ENCODE measurements at regions of chr13 and their contacts with region 1.

Region 1: DNA sequence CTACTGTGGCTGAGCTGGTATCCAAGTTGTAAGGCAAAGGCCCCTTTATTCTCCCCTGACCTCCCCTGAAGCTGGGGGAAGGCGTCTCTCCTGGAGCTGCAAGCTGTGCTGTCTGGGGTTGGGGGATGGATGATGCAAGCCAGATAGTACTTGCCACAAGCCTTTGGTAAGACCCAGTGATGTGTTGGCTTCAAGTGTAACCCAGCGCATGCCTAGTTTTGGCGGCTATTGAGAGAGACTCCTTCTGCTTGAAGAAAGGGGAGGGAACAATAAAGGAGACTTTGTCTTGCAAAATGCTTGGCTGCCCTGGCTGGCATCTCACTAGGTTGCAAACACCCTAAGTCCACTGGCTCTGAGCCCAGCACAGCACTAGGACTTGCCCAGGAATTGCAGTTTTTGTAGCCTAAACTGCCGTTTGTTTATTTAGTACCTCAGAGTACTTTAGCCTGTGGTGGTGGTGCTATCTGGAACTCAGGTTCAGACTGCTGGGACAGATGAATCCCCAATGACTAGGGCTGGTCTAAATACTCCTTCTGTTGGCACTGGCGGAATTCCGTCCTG is 108.2 kb downstream of the TNFSF13B start:
- DNase-seq: no peak
- H3K4me3 ChIP-seq: no peak overlapping the region
- H3K27ac ChIP-seq: no peak overlapping the region
- H3K27me3 ChIP-seq: no peaks in the 10 kb centered on the region
- CTCF ChIP-seq: no peak

Region 2: GRCh38 chr13:108427355-108427754 is 49.6 kb after region 1 on chr13:
- CTCF ChIA-PET with region 1: no interaction called
- POLR2A ChIA-PET with region 1: interaction called, 11 read pairs
- DNase-seq: no peak
- H3K4me3 ChIP-seq: no peak overlapping the region
- H3K27ac ChIP-seq: no peak overlapping the region
- H3K27me3 ChIP-seq: no peaks in the 10 kb centered on the region
- CTCF ChIP-seq: no peak